ENCODE measurements at regions of chr2 and their contacts with region 1.

Region 1: DNA sequence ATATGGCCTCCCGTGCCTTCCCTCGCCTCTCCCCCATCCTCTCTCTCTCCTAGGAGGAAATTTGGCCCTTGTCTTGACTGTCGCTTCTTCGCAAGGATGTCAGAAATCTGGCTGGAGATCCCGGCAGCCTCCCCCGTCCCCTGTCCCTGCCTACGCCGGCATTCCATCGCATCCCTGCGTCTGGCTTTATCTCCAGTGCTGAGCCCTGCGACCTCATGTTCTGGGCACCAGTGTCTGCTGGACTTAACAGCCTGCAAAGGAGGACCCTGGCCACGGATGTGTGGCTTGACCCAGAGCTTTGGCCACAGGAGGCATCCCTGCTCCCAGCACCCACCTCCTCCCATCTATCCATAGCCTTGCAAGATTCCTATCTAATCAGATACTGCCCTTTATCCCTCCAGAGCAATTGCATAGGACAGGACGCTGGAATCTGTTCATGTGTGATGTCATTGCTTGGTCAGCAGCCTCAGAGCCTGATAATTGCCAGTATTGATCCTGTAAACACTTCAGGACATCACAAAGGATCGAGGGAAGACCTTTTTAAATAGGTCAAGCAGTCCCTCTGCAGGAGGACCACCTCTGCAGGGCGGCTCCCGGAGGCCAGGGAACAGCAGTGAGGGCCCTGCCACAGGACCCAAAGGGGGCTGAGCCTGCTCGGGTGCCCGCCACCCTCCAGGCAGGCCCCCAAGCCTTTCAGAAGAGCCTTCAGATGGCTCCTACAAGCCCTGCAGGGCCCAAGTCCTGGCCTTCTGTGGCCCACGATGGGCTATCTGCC is 168.2 kb downstream of the TWIST2 start:
- DNase-seq: peak; percentile 9 to 15
- H3K4me3 ChIP-seq: no peak overlapping the region
- H3K27ac ChIP-seq: peak overlapping the region in 1 of 2 donors; percentile 51
- H3K4me1 ChIP-seq: peaks cover 0 to 6% of the 10 kb centered on the region in 2 donors
- H3K27me3 ChIP-seq: no peaks in the 10 kb centered on the region
- CTCF ChIP-seq: no peak
- POLR2A ChIP-seq: no peak

Region 2: DNA sequence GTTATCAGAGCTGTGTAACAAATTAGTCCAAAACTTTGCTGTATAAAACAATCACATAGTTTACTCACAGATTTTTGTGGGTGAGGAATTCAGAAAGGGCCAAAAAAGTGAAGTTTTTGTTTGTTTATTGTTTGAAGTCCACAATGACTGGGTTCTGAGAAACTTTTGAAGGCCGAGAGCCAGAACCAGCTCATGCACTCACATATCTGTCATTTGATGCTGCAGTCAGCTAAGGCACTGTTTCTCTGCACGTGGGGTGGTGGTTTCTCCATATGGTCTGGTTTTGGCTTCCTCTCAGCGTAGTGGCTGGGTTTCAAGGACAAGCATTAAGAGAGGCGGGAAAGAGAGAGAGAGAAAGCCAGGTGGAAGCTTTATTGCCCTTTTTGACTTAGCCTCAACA is 36.5 kb before region 1 on chr2:
- intact Hi-C with region 1: loop called (anchors 2 kb)
- DNase-seq: no peak
- H3K4me3 ChIP-seq: no peak overlapping the region
- H3K27ac ChIP-seq: no peak overlapping the region
- H3K4me1 ChIP-seq: no peaks in the 10 kb centered on the region
- H3K27me3 ChIP-seq: no peaks in the 10 kb centered on the region
- CTCF ChIP-seq: no peak
- POLR2A ChIP-seq: no peak

Region 3: DNA sequence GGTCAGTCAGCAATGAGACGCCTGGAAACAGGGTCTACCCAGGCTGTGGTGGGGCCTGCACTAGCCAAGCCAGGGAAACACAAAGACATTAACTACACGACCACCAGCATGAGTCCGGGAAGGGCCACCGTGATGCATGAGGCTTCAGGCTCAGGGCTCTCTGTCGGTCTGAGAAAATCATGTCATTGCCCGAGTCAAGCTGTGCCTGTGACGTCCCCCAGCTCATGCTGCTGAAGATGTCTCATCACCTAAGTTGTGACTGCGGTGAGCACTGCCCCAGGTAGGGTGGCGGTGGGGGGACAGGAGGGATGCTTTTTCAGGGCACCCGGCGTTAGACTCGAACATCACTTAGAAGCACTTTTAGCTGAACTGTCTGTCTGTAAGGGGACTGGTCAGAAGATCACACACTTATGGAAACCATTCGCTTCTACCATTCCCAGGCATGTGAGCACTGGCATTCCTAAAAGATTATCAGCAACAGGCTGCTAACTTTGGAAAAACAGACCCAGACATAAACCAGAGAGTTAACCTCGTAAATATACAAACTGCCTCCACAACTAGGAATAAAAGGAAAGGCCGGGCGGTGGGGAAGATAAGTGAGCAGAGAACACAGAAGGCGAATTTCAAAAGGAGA is 150.2 kb after region 1 on chr2:
- intact Hi-C with region 1: no loop called
- DNase-seq: peak in 1 of 2 donors; percentile 12
- H3K4me3 ChIP-seq: no peak overlapping the region
- H3K27ac ChIP-seq: peak overlapping the region in 1 of 2 donors; percentile 40
- H3K4me1 ChIP-seq: no peaks in the 10 kb centered on the region
- H3K27me3 ChIP-seq: no peaks in the 10 kb centered on the region
- CTCF ChIP-seq: no peak
- POLR2A ChIP-seq: no peak